ENCODE measurements at regions of chr1 and their contacts with region 1.

Region 1: DNA sequence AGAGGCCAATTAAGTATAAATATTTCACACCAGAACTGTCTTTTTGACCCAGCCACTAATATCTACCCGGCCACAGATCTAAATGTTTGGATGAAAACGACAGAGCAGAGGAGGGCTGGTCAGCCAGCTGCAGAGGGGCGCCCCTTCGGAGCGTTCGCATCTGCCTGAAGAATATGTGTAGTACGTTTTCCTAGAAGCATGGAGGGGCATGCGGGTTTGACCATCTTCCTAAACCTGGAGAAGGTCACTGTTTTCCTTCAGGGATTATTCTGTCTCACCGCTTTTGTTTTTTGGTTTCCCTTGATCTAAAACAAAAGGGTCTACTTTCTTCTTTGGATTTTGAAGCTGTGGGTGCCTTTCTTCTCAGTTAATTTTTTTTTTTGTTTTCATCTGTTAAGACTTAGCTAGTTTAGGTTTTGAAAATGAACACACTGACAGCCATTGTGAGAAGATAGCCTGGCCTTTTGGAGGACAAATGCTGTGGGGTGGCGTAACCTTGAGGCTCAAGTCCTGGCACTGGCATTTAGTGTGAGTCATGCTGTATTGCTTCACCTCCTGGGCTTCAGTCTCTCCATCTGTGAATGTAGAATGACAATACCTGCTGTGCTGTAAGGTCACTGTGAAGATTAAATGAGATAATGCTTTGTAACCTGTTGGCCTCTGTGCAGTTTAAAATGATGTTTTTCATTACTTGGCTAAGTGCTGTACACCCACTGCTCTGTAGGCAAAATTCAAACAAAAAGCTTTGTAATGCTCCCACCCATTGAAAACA is 74.1 kb upstream of the IRF2BP2 start:
- DNase-seq: peak in 1 of 2 donors; percentile 88
- H3K4me3 ChIP-seq: no peak overlapping the region
- H3K27ac ChIP-seq: no peak overlapping the region
- H3K4me1 ChIP-seq: peaks cover 8 to 11% of the 10 kb centered on the region in 2 donors
- H3K27me3 ChIP-seq: no peaks in the 10 kb centered on the region
- CTCF ChIP-seq: no peak

Region 2: GRCh38 chr1:234617986-234618736 is 65.9 kb before region 1 on chr1:
- intact Hi-C with region 1: loop called (anchors 2 kb)
- DNase-seq: no peak
- H3K4me3 ChIP-seq: peak overlapping the region in 1 of 2 donors; percentile 4
- H3K27ac ChIP-seq: peak overlapping the region; percentile 77 to 99
- H3K4me1 ChIP-seq: peaks cover 9 to 42% of the 10 kb centered on the region in 2 donors
- H3K27me3 ChIP-seq: no peaks in the 10 kb centered on the region
- CTCF ChIP-seq: no peak

Measured in ascending aorta (tissue), 2 donors.